HEK293 (cell line): ENCODE measurements at regions of chr5 and their contacts with region 1.

Region 1: GRCh38 chr5:133996683-133997252 is 8.0 kb downstream of the VDAC1 start:
- H3K4me3 ChIP-seq: no peak overlapping the region
- H3K27ac ChIP-seq: no peak overlapping the region
- H3K4me1 ChIP-seq: peaks cover 32% of the 10 kb centered on the region
- CTCF ChIP-seq: peak; percentile 35; the same call in 1 of the 2 replicates

Region 2: DNA sequence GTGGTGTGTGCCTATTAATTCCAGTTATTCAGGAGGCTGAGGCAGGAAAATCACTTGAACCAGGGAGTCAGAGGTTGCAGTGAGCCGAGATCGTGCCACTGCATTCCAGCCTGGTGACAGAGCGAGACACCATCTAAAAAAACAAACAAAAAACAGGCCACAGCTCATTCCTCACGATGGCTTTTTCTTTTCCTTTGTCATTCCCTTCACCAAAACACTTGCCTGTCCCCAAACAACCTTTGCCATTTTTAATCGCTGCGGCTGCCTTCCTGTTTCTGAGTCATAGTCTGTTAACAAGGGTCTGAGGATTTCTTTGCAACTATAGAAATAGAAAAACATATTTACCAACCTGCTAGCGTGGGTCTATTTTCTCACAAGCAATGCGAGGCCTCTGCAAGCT is 261.4 kb before region 1 on chr5:
- CTCF ChIA-PET with region 1: no interaction called
- POLR2A ChIA-PET with region 1: no interaction called
- H3K4me3 ChIP-seq: no peak overlapping the region
- H3K27ac ChIP-seq: no peak overlapping the region
- H3K4me1 ChIP-seq: 0 out of 2 replicates have a peak, but pooled peaks cover 3% of the 10 kb centered on the region
- CTCF ChIP-seq: no peak

Region 3: DNA sequence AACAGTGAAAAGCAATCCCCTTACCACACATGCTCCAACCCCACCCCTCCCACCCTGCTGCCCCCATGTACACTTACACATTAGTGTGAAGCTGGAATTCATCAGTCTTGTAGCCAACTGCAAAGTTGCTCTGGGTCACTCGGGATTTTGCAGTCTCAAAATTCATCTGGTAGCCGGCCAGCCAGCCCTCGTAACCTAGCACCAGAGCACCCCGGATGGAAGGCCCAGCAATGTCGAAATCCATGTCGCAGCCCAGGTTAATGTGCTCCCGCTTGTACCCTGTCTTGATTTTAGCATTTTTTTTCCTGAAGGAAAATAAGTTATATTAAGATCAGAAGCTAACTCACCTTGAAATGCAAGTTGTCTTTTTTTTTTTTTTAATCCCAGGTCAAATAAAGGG is 16.1 kb before region 1 on chr5:
- CTCF ChIA-PET with region 1: interaction called, 25 read pairs
- POLR2A ChIA-PET with region 1: interaction called, 3 read pairs
- H3K4me3 ChIP-seq: no peak overlapping the region
- H3K27ac ChIP-seq: no peak overlapping the region
- H3K4me1 ChIP-seq: no peaks in the 10 kb centered on the region
- CTCF ChIP-seq: no peak

Region 4: DNA sequence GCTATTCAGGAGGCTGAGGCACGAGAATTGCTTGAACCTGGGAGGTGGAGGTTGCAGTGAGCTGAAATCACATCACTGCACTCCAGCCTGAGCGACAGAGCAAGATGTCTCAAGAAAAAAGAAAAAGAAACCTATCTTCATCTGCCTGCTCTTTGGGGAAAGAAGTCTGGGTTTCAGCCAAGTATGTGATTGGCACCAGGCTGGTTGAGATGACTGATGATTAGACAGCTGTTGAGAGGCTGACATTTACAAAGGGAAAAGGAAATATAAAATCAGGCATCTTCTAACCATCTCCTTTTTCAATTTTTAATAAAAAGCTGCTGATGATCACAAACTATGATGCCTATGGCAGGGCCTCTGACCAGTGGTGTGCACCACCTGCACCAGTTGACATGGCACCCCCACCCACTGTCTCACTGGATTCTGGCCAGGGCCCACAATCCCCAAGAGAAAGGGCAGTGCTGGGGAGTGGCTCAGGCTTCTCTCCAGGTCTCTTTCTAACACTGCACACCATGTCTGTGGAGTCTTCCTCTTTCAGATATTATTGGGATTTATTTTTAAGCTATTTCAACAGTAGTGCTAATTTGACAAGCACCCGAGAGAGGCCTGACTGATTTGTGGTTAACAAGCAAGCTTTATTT is 11.1 kb before region 1 on chr5:
- CTCF ChIA-PET with region 1: interaction called, 25 read pairs
- POLR2A ChIA-PET with region 1: interaction called, 3 read pairs
- H3K4me3 ChIP-seq: no peak overlapping the region
- H3K27ac ChIP-seq: no peak overlapping the region
- H3K4me1 ChIP-seq: no peaks in the 10 kb centered on the region; the same call in 1 of the 2 replicates
- CTCF ChIP-seq: no peak

Region 5: GRCh38 chr5:134007581-134008256 is 11.0 kb after region 1 on chr5:
- CTCF ChIA-PET with region 1: interaction called, 17 read pairs
- POLR2A ChIA-PET with region 1: interaction called, 4 read pairs
- H3K4me3 ChIP-seq: no peak overlapping the region
- H3K27ac ChIP-seq: no peak overlapping the region
- H3K4me1 ChIP-seq: peaks cover 3% of the 10 kb centered on the region; the same call in 1 of the 2 replicates
- CTCF ChIP-seq: no peak

Region 6: GRCh38 chr5:134113902-134114875 is 117.4 kb after region 1 on chr5 and contains the start of gene TCF7:
- CTCF ChIA-PET with region 1: no interaction called
- POLR2A ChIA-PET with region 1: no interaction called
- H3K4me3 ChIP-seq: peak within 1 kb of the TSS; percentile 60
- H3K27ac ChIP-seq: peak within 1 kb of the TSS; percentile 56; the same call in 1 of the 2 replicates
- H3K4me1 ChIP-seq: no peaks in the 10 kb centered on the region
- CTCF ChIP-seq: no peak